ENCODE measurements at regions of chr14 and their contacts with region 1.

Region 1: DNA sequence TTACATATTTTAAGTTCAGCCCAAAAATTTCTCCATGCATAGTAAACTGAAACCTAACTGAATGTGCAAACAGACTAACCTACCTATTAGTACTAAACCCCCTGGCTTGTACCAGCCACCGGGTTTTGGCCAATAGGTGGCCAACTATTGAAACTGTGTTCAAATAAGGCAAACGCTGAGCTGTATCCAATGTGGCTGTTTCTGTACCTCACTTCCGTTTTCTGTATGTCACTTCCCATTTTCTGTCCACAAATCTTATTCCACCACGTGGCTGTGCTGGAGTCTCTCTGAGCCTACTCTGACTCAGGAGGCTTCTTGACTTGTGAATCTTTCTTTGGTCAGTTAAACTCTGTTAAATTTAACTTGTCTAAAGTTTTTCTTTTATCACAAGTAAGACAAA is 6.0 kb upstream of the FBXO34 start:
- DNase-seq: no peak
- CTCF ChIP-seq: no peak

Region 2: GRCh38 chr14:55254581-55254980 is 10.6 kb before region 1 on chr14:
- CTCF ChIA-PET with region 1: interaction called, 26 read pairs
- POLR2A ChIA-PET with region 1: no interaction called
- DNase-seq: no peak
- CTCF ChIP-seq: no peak